Caco-2 (cell line): ENCODE measurements at regions of chr11 and their contacts with region 1.

Region 1: DNA sequence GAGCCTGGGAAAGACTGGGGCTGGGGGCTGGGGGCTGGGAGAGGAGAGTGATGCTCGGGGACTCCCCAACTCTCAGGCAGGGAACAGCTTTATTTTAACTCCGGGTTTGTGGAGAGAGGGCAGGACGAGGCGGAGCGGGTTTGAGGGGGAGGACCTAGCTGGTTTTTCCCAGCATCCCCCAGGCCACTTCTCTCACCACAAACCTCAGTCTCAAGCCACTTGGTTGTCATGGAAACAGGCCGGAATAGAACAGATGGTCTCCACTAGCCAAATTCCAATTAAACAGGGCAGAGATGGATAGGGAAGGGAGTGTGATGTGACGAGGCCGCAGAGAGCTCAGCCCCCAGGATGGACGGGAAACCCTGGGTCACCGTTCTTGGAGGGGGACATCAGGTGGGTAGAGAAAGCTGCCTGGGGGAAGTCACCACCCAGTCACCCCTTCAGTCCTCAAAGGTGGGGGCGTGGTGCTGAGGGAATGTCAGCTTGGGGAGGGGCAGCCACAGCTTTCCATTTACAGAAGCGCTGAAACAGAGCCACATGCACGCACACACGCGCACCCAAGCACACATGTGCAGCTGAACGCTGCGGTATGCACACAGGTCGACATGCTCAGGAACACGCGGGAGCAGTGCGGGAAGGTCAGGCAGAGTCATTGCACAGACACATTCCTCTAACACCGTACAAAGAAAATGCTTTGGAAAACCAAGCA is 19.2 kb downstream of the NECTIN1 start:
- DNase-seq: no peak
- H3K4me3 ChIP-seq: no peak overlapping the region
- H3K4me3 Mint-ChIP-seq: no peak overlapping the region
- H3K27ac Mint-ChIP-seq: peak overlapping the region; percentile 28
- H3K4me1 ChIP-seq: peaks cover 68% of the 10 kb centered on the region
- H3K4me1 Mint-ChIP-seq: peaks cover 81% of the 10 kb centered on the region
- H3K27me3 ChIP-seq: no peaks in the 10 kb centered on the region
- H3K27me3 Mint-ChIP-seq: no peaks in the 10 kb centered on the region
- CTCF ChIP-seq: no peak

Region 2: DNA sequence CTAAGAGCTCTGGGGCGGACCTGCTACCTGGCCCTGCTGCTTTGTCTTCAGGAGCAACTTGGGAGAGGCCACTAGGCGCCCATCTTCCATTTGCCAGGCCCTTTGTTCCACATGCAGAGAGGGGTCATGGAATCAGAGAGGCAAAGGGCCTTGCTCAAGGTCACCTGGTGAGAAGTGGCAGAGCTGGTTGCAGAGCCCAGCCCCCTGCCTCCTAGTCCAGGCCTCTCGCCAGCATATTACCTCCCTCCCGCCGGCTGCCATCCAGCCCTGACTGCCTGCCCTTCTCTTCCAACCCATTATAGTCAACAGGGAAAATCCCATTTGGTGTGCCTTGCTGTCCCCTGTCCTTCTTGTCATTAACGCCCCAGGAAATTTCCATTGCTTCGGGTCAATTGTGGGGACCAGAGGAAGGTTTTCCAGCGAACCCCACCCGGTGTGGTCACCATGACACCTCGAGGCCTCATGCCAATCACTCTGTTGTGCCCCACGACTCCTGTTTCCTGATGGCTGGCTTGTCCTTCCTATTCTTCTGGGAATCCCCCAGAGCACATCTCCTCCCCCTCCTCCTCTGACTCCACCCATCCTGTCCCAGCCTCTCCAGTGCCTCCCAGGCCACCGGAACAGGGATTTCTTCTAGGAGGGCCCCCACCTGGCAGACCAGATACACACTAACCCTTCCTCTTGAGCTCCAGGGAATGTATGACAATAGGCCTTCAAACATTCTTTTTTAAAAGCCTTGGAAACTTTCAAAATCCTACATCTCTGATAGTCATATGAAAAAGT is 57.8 kb before region 1 on chr11:
- CTCF ChIA-PET with region 1: no interaction called
- POLR2A ChIA-PET with region 1: no interaction called
- intact Hi-C with region 1: no loop called
- DNase-seq: no peak
- H3K4me3 ChIP-seq: no peak overlapping the region
- H3K4me3 Mint-ChIP-seq: no peak overlapping the region
- H3K27ac Mint-ChIP-seq: no peak overlapping the region
- H3K4me1 ChIP-seq: no peaks in the 10 kb centered on the region
- H3K4me1 Mint-ChIP-seq: no peaks in the 10 kb centered on the region
- H3K27me3 ChIP-seq: no peaks in the 10 kb centered on the region
- H3K27me3 Mint-ChIP-seq: peaks cover 8% of the 10 kb centered on the region
- CTCF ChIP-seq: no peak

Region 3: DNA sequence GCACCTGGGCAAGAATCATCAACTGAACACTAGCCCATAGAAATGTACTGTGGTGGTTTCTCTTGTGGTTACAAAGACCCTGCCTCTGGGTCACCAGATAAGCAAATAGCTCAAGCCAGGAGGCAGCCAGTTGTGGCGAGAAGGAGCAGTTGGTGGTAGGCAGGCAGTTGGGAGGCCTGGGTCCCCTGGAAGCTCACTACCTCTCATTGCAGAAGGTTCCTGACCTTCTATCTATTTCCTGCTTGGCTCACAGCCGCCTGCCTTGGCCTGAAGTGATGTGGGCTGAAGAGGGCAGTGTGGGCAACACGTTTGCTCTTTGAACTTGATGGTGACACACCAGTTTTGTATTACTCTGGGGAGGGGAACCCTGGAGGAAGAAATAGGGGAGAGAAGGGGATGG is 15.5 kb before region 1 on chr11:
- CTCF ChIA-PET with region 1: interaction called, 6 read pairs
- POLR2A ChIA-PET with region 1: no interaction called
- intact Hi-C with region 1: loop called (anchors 1 kb)
- DNase-seq: peak in 1 of 2 experiments; percentile 62
- H3K4me3 ChIP-seq: no peak overlapping the region
- H3K4me3 Mint-ChIP-seq: no peak overlapping the region
- H3K27ac Mint-ChIP-seq: peak overlapping the region; percentile 22
- H3K4me1 ChIP-seq: peaks cover 13% of the 10 kb centered on the region; the same call in 1 of the 2 replicates
- H3K4me1 Mint-ChIP-seq: peaks cover 21% of the 10 kb centered on the region
- H3K27me3 ChIP-seq: no peaks in the 10 kb centered on the region
- H3K27me3 Mint-ChIP-seq: no peaks in the 10 kb centered on the region
- CTCF ChIP-seq: peak; percentile 38 to 73

Region 4: GRCh38 chr11:119721129-119722120 is 11.6 kb after region 1 on chr11:
- CTCF ChIA-PET with region 1: interaction called, 18 read pairs
- POLR2A ChIA-PET with region 1: interaction called, 3 read pairs
- intact Hi-C with region 1: no loop called
- DNase-seq: peak in 1 of 2 experiments; percentile 66
- H3K4me3 ChIP-seq: no peak overlapping the region
- H3K4me3 Mint-ChIP-seq: no peak overlapping the region
- H3K27ac Mint-ChIP-seq: no peak overlapping the region
- H3K4me1 ChIP-seq: peaks cover 56% of the 10 kb centered on the region
- H3K4me1 Mint-ChIP-seq: peaks cover 57% of the 10 kb centered on the region
- H3K27me3 ChIP-seq: no peaks in the 10 kb centered on the region
- H3K27me3 Mint-ChIP-seq: no peaks in the 10 kb centered on the region
- CTCF ChIP-seq: peak; percentile 40 to 63

Region 5: DNA sequence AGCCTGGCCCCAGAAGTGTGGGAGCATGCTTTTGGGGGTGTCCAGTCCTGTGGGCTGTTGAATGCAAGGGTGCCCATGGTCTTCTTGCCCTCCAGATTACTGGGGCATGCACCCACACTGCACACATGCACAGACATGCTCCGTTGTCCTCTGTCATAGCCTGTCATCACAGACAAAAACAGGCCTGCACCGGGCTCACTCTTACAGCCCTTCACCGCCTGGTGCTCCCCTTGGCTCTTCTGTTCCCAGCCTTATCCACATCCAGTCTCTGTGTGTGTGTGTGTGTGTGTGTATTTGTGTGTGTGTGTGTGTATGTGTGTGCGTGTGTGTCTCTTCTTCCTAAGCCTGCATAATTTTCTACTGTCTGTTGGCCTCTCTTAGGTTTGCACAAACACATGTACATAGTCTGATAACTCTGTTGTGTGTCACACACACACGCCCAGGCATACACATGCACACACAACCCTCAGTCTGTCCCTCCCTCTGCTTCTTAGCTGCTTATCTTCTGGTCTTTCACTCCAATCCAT is 42.6 kb after region 1 on chr11:
- CTCF ChIA-PET with region 1: no interaction called
- POLR2A ChIA-PET with region 1: no interaction called
- intact Hi-C with region 1: no loop called
- DNase-seq: peak in 1 of 2 experiments; percentile 20
- H3K4me3 ChIP-seq: no peak overlapping the region
- H3K4me3 Mint-ChIP-seq: no peak overlapping the region
- H3K27ac Mint-ChIP-seq: no peak overlapping the region
- H3K4me1 ChIP-seq: no peaks in the 10 kb centered on the region
- H3K4me1 Mint-ChIP-seq: no peaks in the 10 kb centered on the region
- H3K27me3 ChIP-seq: peaks cover 1% of the 10 kb centered on the region; the same call in 1 of the 2 replicates
- H3K27me3 Mint-ChIP-seq: peaks cover 3% of the 10 kb centered on the region
- CTCF ChIP-seq: no peak